ENCODE measurements at regions of chr3 and their contacts with region 1.

Region 1: DNA sequence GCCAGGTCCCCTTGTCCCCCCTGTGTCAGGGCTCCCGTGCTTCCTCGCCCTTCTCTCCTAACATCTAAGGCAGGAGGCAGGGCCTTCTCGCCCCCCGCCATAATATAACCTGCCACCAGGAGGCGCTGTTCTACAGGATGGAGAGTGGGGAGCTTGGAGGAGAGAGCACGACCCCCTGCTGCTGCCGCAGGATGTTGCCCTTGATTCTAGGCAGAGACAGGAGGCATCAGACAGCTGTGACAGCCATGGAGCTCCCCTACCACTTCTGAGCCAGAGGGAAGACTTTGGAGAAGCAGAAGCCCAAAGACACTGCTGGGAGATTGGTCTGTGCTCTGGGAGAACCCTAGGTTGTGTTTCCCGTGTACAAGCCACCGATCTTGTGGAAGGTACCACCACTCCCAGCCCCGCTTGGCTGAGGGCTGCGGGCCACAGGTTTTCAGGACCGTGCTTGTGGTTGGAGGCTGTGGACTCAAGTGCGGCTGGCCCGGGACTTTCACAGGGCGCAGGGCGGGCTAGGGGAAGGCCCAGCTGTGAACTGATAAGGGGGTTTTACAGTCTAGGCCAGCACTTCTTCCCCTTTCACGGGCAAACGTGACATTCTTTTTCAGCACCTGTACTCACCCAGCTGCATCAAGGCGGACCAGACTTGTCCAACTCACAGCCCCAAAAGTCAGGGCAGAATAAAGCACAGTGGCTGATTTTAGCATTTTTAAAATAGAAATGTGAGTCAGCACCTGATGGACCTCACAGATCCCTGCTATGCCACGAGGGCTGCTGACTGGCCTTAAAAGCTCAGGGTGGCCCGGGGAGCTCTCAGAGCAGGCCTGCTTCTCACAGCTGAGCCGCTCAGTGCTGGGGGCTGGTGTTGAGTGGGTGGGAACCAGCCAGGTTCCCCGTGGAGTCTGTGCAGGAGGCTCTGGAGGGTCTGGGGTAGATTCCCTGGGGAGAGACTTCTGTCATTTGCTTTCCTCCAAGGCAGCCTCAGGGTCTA is 2.6 kb upstream of the TIGIT start:
- DNase-seq: peak; percentile 83 to 94 (median 90)
- ATAC-seq: peak; percentile 86
- H3K4me3 ChIP-seq: peak overlapping the region; percentile 40
- H3K4me3 Mint-ChIP-seq: peak overlapping the region; percentile 75
- H3K27ac ChIP-seq: peak overlapping the region; percentile 52 to 63
- H3K27ac Mint-ChIP-seq: peak overlapping the region; percentile 78
- H3K4me1 ChIP-seq: peaks cover 49% of the 10 kb centered on the region
- H3K4me1 Mint-ChIP-seq: peaks cover 26% of the 10 kb centered on the region
- H3K27me3 ChIP-seq: no peaks in the 10 kb centered on the region
- H3K27me3 Mint-ChIP-seq: no peaks in the 10 kb centered on the region
- CTCF ChIP-seq: peak; percentile 87

Region 2: GRCh38 chr3:113769551-113769950 is 521.7 kb before region 1 on chr3:
- CTCF ChIA-PET with region 1: no interaction called
- POLR2A ChIA-PET with region 1: no interaction called
- intact Hi-C with region 1: no loop called
- DNase-seq: no peak
- ATAC-seq: no peak
- H3K4me3 ChIP-seq: no peak overlapping the region
- H3K4me3 Mint-ChIP-seq: no peak overlapping the region
- H3K27ac ChIP-seq: no peak overlapping the region
- H3K27ac Mint-ChIP-seq: no peak overlapping the region
- H3K4me1 ChIP-seq: no peaks in the 10 kb centered on the region
- H3K4me1 Mint-ChIP-seq: peaks cover 11% of the 10 kb centered on the region
- H3K27me3 ChIP-seq: no peaks in the 10 kb centered on the region
- H3K27me3 Mint-ChIP-seq: no peaks in the 10 kb centered on the region
- CTCF ChIP-seq: no peak

Region 3: GRCh38 chr3:114152519-114153151 is 138.6 kb before region 1 on chr3:
- CTCF ChIA-PET with region 1: interaction called, 25 read pairs
- POLR2A ChIA-PET with region 1: interaction called, 3 read pairs
- intact Hi-C with region 1: loop called in 1 of 2 experiments (anchors 2 kb)
- DNase-seq: peak; percentile 73 to 89 (median 83)
- ATAC-seq: peak; percentile 98
- H3K4me3 ChIP-seq: peak overlapping the region; percentile 57
- H3K4me3 Mint-ChIP-seq: peak overlapping the region; percentile 43
- H3K27ac ChIP-seq: no peak overlapping the region
- H3K27ac Mint-ChIP-seq: no peak overlapping the region
- H3K4me1 ChIP-seq: peaks cover 7% of the 10 kb centered on the region
- H3K4me1 Mint-ChIP-seq: peaks cover 5% of the 10 kb centered on the region
- H3K27me3 ChIP-seq: no peaks in the 10 kb centered on the region
- H3K27me3 Mint-ChIP-seq: no peaks in the 10 kb centered on the region
- CTCF ChIP-seq: peak; percentile 90

Region 4: DNA sequence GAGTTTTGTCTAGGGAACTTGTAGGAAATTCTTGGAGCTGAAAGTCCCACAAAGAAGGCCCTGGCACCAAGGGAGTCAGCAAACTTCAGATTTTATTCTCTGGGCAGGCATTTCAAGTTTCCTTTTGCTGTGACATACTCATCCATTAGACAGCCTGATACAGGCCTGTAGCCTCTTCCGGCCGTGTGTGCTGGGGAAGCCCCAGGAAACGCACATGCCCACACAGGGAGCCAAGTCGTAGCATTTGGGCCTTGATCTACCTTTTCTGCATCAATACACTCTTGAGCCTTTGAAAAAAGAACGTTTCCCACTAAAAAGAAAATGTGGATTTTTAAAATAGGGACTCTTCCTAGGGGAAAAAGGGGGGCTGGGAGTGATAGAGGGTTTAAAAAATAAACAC is 17.6 kb after region 1 on chr3:
- CTCF ChIA-PET with region 1: interaction called, 8 read pairs
- POLR2A ChIA-PET with region 1: interaction called, 11 read pairs
- intact Hi-C with region 1: no loop called
- DNase-seq: peak; percentile 28 to 89 (median 50)
- ATAC-seq: peak; percentile 92
- H3K4me3 ChIP-seq: peak overlapping the region; percentile 18
- H3K4me3 Mint-ChIP-seq: peak overlapping the region; percentile 14
- H3K27ac ChIP-seq: peak overlapping the region; percentile 51 to 81
- H3K27ac Mint-ChIP-seq: peak overlapping the region; percentile 75
- H3K4me1 ChIP-seq: peaks cover 56% of the 10 kb centered on the region
- H3K4me1 Mint-ChIP-seq: peaks cover 42% of the 10 kb centered on the region
- H3K27me3 ChIP-seq: no peaks in the 10 kb centered on the region
- H3K27me3 Mint-ChIP-seq: no peaks in the 10 kb centered on the region
- CTCF ChIP-seq: no peak

Region 5: GRCh38 chr3:114323546-114324254 is 32.5 kb after region 1 on chr3:
- CTCF ChIA-PET with region 1: interaction called, 10 read pairs
- POLR2A ChIA-PET with region 1: no interaction called
- intact Hi-C with region 1: no loop called
- DNase-seq: peak in 1 of 14 experiments; percentile 49
- ATAC-seq: peak; percentile 43
- H3K4me3 ChIP-seq: no peak overlapping the region
- H3K4me3 Mint-ChIP-seq: no peak overlapping the region
- H3K27ac ChIP-seq: no peak overlapping the region
- H3K27ac Mint-ChIP-seq: peak overlapping the region; percentile 57
- H3K4me1 ChIP-seq: peaks cover 3% of the 10 kb centered on the region
- H3K4me1 Mint-ChIP-seq: peaks cover 45% of the 10 kb centered on the region
- H3K27me3 ChIP-seq: no peaks in the 10 kb centered on the region
- H3K27me3 Mint-ChIP-seq: no peaks in the 10 kb centered on the region
- CTCF ChIP-seq: no peak

Region 6: DNA sequence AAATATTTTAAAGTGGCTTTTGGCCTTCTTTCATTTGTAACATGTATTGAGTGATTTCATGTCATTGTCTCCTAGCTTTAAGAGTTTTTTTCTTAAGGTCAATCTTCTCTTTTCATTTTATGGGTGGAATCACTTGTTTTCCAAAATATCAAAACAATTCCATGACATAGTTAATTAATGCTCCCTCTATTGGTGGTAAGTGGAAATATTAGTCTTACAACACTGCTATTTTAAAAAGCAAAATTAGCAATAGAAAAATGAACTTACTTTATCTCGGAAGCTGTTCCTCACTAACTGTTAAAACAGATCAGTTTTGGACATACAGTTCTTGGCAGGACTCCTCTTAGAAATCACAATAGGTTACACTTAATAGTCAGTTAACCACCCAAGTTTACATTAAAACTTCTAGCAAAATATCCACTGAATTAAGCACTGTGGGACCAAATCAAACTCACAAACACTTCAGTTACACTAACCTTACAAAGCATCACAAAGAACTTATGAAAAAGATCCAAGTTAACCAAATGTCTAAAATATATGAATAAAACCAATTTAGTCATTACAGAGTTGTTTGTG is 45.0 kb after region 1 on chr3:
- CTCF ChIA-PET with region 1: interaction called, 10 read pairs
- POLR2A ChIA-PET with region 1: interaction called, 4 read pairs
- intact Hi-C with region 1: loop called in 1 of 2 experiments (anchors 5 kb)
- DNase-seq: no peak
- ATAC-seq: no peak
- H3K4me3 ChIP-seq: no peak overlapping the region
- H3K4me3 Mint-ChIP-seq: no peak overlapping the region
- H3K27ac ChIP-seq: no peak overlapping the region
- H3K27ac Mint-ChIP-seq: peak overlapping the region; percentile 4
- H3K4me1 ChIP-seq: peaks cover 30% of the 10 kb centered on the region
- H3K4me1 Mint-ChIP-seq: peaks cover 35% of the 10 kb centered on the region
- H3K27me3 ChIP-seq: no peaks in the 10 kb centered on the region
- H3K27me3 Mint-ChIP-seq: no peaks in the 10 kb centered on the region
- CTCF ChIP-seq: peak; percentile 47

Region 7: DNA sequence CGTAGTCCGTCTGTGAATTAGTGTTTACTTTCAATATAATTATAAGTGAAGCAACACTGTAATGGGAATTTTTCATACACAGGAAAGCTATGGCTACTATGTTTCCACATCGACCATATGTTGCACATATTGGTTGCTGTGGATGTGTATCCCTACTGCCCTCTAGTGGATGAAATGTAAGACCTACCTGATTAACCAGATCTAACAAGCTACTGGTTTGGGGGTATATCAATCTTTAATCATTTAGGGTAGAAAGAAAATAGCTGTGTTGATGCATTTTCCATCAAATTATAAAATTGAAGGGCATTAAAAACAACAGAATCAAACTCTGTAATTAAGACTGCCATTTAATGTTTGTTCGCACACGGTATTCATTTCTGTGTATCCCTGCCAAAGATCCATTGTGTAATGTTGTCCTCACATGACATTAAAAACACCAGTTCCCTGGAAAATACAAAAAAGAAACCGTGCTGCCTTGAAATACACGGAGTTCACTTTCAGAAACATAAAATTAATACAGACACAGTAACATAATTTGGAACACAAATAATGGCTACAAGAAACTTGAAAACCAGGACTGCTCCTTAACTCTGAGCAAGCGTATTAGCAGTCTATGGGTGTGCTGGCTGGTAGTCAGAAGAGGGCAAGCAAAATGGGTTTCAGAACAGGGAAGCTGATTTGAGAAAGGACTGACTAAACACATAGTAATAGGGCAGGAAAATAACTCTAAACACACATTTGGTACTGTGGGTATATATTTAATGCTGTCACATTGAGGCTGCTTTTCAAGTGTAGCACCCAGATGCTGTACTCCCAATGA is 127.7 kb after region 1 on chr3:
- CTCF ChIA-PET with region 1: interaction called, 23 read pairs
- POLR2A ChIA-PET with region 1: interaction called, 4 read pairs
- intact Hi-C with region 1: loop called (anchors 1 to 2 kb)
- DNase-seq: peak in 4 of 14 experiments; percentile 6 to 79 (median 78)
- ATAC-seq: peak; percentile 92
- H3K4me3 ChIP-seq: no peak overlapping the region
- H3K4me3 Mint-ChIP-seq: no peak overlapping the region
- H3K27ac ChIP-seq: no peak overlapping the region
- H3K27ac Mint-ChIP-seq: no peak overlapping the region
- H3K4me1 ChIP-seq: no peaks in the 10 kb centered on the region
- H3K4me1 Mint-ChIP-seq: peaks cover 6% of the 10 kb centered on the region
- H3K27me3 ChIP-seq: no peaks in the 10 kb centered on the region
- H3K27me3 Mint-ChIP-seq: no peaks in the 10 kb centered on the region
- CTCF ChIP-seq: peak; percentile 86

Region 8: DNA sequence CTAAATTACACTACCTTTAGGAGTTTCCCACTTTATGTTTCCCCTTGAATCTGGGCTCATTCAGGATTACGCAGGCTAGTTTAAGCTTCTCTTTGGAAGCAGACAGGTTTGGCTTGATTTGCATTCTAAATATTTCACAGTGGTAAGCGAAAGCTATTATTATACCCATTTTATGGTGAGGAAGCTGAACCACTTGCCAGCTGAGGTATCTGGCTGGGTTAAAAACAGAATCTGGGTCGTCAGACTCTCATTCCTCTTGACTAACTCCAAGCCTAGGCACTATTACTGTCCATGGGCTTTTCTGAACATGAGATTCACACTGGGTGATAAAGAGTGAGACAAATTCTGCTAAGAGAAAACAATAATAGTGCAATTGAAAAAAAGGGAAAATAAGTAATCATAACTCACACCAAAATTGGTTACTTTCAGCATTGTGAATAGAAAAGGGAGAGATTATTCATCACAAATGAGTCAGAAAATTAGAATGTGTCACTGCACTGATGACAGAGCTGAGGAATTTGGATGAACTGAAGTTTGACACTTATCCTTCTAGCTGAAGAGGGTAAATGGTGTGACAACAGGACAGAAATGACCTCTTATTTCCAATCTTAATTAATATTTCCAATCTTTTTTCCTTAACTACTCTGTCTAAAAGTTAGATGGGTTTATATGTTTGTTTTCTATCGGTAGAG is 213.9 kb after region 1 on chr3:
- CTCF ChIA-PET with region 1: no interaction called
- POLR2A ChIA-PET with region 1: no interaction called
- intact Hi-C with region 1: no loop called
- DNase-seq: no peak
- ATAC-seq: no peak
- H3K4me3 ChIP-seq: no peak overlapping the region
- H3K4me3 Mint-ChIP-seq: no peak overlapping the region
- H3K27ac ChIP-seq: no peak overlapping the region
- H3K27ac Mint-ChIP-seq: no peak overlapping the region
- H3K4me1 ChIP-seq: peaks cover 4% of the 10 kb centered on the region
- H3K4me1 Mint-ChIP-seq: peaks cover 53% of the 10 kb centered on the region
- H3K27me3 ChIP-seq: no peaks in the 10 kb centered on the region
- H3K27me3 Mint-ChIP-seq: no peaks in the 10 kb centered on the region
- CTCF ChIP-seq: no peak

Measured in CD4-positive, alpha-beta T cell (primary cell).